IMR-90 (cell line): ENCODE measurements at regions of chr6 and their contacts with region 1.

Region 1: DNA sequence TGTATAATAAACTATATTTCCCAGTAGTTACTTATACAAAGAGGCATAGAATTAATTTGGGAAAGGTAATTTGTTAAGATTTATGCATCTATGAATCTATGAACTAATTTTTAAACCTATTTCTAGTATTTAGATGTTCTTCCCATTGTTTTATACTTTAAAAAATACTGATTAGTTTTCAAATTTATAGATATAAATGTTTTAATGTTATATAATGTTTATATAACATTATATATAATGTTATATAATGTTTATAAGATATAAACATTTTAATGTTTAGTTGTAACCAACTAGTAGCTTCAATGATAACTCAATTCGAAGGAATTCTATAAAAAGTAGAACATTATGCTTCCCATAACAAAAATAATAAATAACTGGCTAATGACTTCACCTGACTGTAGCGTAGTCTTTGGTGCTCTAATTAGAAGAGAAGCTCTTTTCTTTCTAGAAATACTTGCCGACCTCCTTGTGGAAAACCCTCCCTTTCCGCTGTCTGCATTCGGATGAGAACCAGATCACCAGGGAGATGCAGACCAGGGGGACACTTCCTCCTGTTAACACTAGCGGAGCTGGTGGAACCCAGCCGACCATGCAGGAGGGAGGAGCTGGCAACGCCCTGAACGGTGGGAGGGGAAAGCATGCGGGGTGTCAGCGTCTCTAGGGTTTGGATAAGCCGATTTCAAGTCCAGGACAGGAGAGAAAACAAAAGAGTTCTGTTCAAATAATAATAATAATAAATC is 158.4 kb downstream of the OR2B2 start:
- DNase-seq: peak; percentile 76
- ATAC-seq: peak; percentile 69
- H3K4me3 ChIP-seq: peak overlapping the region; percentile 58
- H3K27ac ChIP-seq: no peak overlapping the region
- H3K4me1 ChIP-seq: no peaks in the 10 kb centered on the region
- H3K27me3 ChIP-seq: peaks cover 7% of the 10 kb centered on the region
- CTCF ChIP-seq: no peak
- POLR2A ChIP-seq: no peak
- RAD21 ChIP-seq: no peak

Region 2: DNA sequence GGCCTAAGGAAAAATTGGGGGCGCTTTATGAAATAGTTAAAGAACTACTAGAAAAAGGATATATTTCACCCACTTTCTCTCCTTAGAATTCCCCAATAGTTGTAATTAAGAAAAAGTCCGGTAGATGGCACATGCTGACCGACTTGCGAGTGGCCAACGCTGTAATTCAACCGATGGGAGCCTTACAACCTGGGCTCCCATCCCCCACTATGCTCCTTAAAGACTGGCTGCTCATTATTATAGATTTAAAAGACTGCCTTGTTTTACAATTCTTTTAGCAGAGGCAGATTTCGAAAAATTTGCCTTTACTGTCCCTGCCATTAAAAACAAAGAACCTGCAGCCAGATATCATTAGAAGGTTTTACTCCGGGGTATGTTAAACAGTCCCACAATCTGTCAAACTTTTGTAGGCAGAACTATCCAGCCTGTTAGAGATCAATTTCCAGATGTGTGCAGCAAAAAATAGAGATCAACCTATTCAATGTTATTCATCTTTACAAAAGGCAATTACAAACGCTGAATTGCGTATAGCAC is 564.9 kb before region 1 on chr6:
- CTCF ChIA-PET with region 1: no interaction called
- POLR2A ChIA-PET with region 1: no interaction called
- dilution Hi-C with region 1: no loop called
- in situ Hi-C with region 1: no loop called
- intact Hi-C with region 1: loop called (anchors 1 kb)
- DNase-seq: peak; percentile 83
- ATAC-seq: peak; percentile 88
- H3K4me3 ChIP-seq: peak overlapping the region; percentile 66
- H3K27ac ChIP-seq: peak overlapping the region; percentile 88
- H3K4me1 ChIP-seq: peaks cover 1% of the 10 kb centered on the region; the same call in 1 of the 2 replicates
- H3K27me3 ChIP-seq: no peaks in the 10 kb centered on the region
- CTCF ChIP-seq: peak; percentile 78
- POLR2A ChIP-seq: no peak
- RAD21 ChIP-seq: peak; percentile 83

Region 3: GRCh38 chr6:27295301-27296081 is 458.3 kb before region 1 on chr6:
- CTCF ChIA-PET with region 1: no interaction called
- POLR2A ChIA-PET with region 1: no interaction called
- dilution Hi-C with region 1: no loop called
- in situ Hi-C with region 1: no loop called
- intact Hi-C with region 1: loop called (anchors 5 kb)
- DNase-seq: peak; percentile 85
- ATAC-seq: peak; percentile 72
- H3K4me3 ChIP-seq: peak overlapping the region; percentile 48
- H3K27ac ChIP-seq: no peak overlapping the region
- H3K4me1 ChIP-seq: no peaks in the 10 kb centered on the region
- H3K27me3 ChIP-seq: peaks cover 9% of the 10 kb centered on the region
- CTCF ChIP-seq: no peak
- POLR2A ChIP-seq: no peak
- RAD21 ChIP-seq: no peak

Region 4: GRCh38 chr6:27503436-27504030 is 250.3 kb before region 1 on chr6:
- CTCF ChIA-PET with region 1: no interaction called
- POLR2A ChIA-PET with region 1: no interaction called
- dilution Hi-C with region 1: no loop called
- in situ Hi-C with region 1: no loop called
- intact Hi-C with region 1: loop called (anchors 5 kb)
- DNase-seq: peak; percentile 78
- ATAC-seq: peak; percentile 53
- H3K4me3 ChIP-seq: peak overlapping the region; percentile 74
- H3K27ac ChIP-seq: no peak overlapping the region
- H3K4me1 ChIP-seq: no peaks in the 10 kb centered on the region
- H3K27me3 ChIP-seq: no peaks in the 10 kb centered on the region
- CTCF ChIP-seq: no peak
- POLR2A ChIP-seq: no peak
- RAD21 ChIP-seq: no peak; the same call in 1 of the 2 replicates

Region 5: DNA sequence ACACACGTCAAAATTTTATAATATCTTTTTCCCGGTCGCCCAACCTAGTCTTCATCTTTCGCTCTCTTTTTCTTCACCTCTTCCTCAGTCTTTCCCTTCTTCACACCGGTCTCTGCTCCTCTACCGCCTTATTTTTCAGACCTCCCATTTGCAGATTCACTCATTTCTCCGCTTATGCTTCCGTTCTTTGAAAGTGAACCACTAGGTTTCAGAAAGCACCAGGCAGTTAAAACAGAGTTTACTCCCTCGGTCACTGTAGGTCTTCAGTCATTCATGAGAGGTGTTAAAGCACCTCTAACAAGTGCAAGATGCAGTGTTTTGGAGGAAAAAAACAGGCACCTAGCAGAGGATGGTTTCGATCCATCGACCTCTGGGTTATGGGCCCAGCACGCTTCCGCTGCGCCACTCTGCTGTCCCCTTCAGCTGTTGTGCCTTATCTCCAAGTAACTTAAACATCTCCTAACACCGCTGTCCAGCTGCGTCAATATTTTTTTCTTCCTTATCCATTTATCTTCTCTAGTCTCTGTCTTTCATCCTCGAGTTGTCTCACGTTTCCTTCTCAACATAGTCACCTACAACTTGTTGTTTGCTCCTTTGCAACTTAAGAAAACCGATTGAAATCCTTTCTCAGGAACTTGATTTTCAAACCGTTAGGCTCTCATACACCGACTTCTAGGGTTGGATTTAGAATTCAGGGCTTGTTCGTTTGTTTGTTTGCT is 161.2 kb before region 1 on chr6:
- CTCF ChIA-PET with region 1: no interaction called
- POLR2A ChIA-PET with region 1: no interaction called
- dilution Hi-C with region 1: no loop called
- in situ Hi-C with region 1: no loop called
- intact Hi-C with region 1: loop called (anchors 2 kb)
- DNase-seq: peak; percentile 90
- ATAC-seq: peak; percentile 98
- H3K4me3 ChIP-seq: peak overlapping the region; percentile 31; the same call in 1 of the 2 replicates
- H3K27ac ChIP-seq: no peak overlapping the region
- H3K4me1 ChIP-seq: no peaks in the 10 kb centered on the region
- H3K27me3 ChIP-seq: no peaks in the 10 kb centered on the region
- CTCF ChIP-seq: no peak
- POLR2A ChIP-seq: no peak
- RAD21 ChIP-seq: no peak

Region 6: GRCh38 chr6:27687154-27688013 is 66.5 kb before region 1 on chr6:
- CTCF ChIA-PET with region 1: interaction called, 3 read pairs
- POLR2A ChIA-PET with region 1: no interaction called
- dilution Hi-C with region 1: no loop called
- in situ Hi-C with region 1: no loop called
- intact Hi-C with region 1: loop called (anchors 2 kb)
- DNase-seq: peak; percentile 62
- ATAC-seq: peak; percentile 85
- H3K4me3 ChIP-seq: peak overlapping the region; percentile 55
- H3K27ac ChIP-seq: no peak overlapping the region
- H3K4me1 ChIP-seq: no peaks in the 10 kb centered on the region
- H3K27me3 ChIP-seq: no peaks in the 10 kb centered on the region
- CTCF ChIP-seq: peak; percentile 63
- POLR2A ChIP-seq: no peak
- RAD21 ChIP-seq: peak; percentile 54